ENCODE measurements at regions of chr18 and their contacts with region 1.

Region 1: DNA sequence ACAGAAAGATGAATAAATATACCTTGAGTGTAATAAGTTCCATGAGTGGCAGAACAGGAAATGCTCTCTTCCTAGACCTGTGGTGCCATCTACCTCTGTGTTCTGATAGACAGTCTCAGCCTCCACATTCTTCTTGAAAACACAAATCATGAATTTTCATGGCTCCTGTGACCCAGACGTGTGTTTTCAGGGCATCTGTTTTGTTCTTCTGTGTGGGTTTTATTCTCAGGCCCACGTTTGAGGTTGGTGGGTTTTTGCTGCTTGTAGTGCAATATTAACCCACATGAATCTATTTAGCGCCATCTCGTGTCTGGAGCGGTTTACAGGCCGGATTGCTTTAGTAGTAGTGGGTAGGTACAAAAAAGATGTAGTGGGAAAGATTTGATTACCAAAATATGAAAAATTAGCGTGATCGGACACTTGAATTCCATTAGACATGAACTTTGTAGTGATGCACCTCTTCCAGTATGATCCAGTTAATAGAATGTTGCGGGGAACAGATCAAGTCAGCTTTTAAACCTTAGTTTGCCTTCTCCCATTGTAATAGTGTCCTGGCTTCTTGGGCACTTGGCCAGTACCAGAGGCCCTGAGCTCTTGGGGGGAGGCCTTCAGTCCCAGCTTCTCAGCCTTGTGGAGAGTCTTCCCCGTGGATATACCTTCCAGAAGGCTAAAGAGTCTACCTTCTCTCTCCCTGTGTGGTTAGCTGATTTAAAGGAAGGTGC is 256.5 kb downstream of the TPGS2 start:
- DNase-seq: no peak
- H3K4me3 ChIP-seq: no peak overlapping the region
- H3K27ac ChIP-seq: no peak overlapping the region
- H3K4me1 ChIP-seq: peaks cover 0 to 4% (median 3%) of the 10 kb centered on the region in 4 experiments; a peak in 5 of 7 replicates
- H3K27me3 ChIP-seq: no peaks in the 10 kb centered on the region
- CTCF ChIP-seq: peak; percentile 6 to 63 (median 63)
- EP300 ChIP-seq: no peak
- POLR2A ChIP-seq: no peak
- RAD21 ChIP-seq: peak; percentile 67 to 75

Region 2: DNA sequence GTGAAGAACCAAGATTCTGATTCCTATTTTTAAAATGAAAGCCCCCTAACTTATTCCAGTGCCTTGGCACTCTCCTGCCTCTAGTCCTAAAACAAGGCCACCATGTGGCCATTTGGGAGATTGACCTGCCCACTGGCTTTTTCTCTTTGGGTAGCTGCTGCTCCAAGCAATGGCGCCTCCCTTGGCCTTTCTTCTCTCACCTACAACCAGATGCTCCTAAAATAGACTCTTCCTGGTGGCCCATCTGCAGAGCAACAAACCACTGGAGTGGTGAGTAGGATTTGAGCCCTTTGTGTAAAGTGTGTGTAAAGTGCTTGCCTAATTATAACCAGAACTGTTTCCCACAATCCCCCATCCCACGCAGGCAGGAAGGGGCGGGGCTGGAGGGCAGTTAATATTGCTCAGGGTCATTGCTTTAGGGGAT is 160.5 kb before region 1 on chr18:
- CTCF ChIA-PET with region 1: interaction called, 16 read pairs
- POLR2A ChIA-PET with region 1: no interaction called
- DNase-seq: peak in 1 of 2 experiments; percentile 70
- H3K4me3 ChIP-seq: no peak overlapping the region
- H3K27ac ChIP-seq: no peak overlapping the region
- H3K4me1 ChIP-seq: no peaks in the 10 kb centered on the region
- H3K27me3 ChIP-seq: no peaks in the 10 kb centered on the region
- CTCF ChIP-seq: peak; percentile 67 to 98 (median 77)
- EP300 ChIP-seq: no peak
- POLR2A ChIP-seq: no peak
- RAD21 ChIP-seq: peak; percentile 64 to 77

Region 3: DNA sequence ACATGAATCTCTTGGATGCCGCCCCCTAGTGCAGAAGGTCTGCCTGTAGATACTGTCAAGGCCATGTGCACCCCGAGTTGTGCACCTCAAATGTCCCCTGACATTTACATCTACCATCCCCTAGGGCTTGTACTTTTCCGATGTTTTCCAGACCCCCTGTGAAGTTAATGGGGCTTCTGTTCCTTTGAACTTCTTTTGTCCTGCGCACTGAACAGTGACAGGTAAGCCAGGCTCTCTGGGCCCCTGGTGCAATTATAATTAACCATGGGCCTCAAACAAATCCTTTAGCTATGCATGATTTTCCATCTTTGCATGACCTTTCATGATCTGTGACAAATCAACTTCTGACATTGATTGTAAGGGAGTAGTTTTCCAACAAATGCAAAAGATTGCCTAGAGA is 116.4 kb before region 1 on chr18:
- CTCF ChIA-PET with region 1: interaction called, 17 read pairs
- POLR2A ChIA-PET with region 1: no interaction called
- DNase-seq: no peak
- H3K4me3 ChIP-seq: no peak overlapping the region
- H3K27ac ChIP-seq: no peak overlapping the region
- H3K4me1 ChIP-seq: peaks cover 3 to 10% (median 6%) of the 10 kb centered on the region in 4 experiments
- H3K27me3 ChIP-seq: no peaks in the 10 kb centered on the region
- CTCF ChIP-seq: peak; percentile 4 to 44 (median 27); a peak in 3 of 4 replicates
- EP300 ChIP-seq: no peak
- POLR2A ChIP-seq: no peak
- RAD21 ChIP-seq: no peak

Region 4: GRCh38 chr18:36561046-36561445 is 11.2 kb before region 1 on chr18:
- CTCF ChIA-PET with region 1: interaction called, 21 read pairs
- POLR2A ChIA-PET with region 1: no interaction called
- DNase-seq: no peak
- H3K4me3 ChIP-seq: no peak overlapping the region
- H3K27ac ChIP-seq: no peak overlapping the region
- H3K4me1 ChIP-seq: peaks cover 0 to 15% (median 7%) of the 10 kb centered on the region in 4 experiments; a peak in 4 of 7 replicates
- H3K27me3 ChIP-seq: no peaks in the 10 kb centered on the region
- CTCF ChIP-seq: no peak
- EP300 ChIP-seq: no peak
- POLR2A ChIP-seq: no peak
- RAD21 ChIP-seq: no peak

Region 5: DNA sequence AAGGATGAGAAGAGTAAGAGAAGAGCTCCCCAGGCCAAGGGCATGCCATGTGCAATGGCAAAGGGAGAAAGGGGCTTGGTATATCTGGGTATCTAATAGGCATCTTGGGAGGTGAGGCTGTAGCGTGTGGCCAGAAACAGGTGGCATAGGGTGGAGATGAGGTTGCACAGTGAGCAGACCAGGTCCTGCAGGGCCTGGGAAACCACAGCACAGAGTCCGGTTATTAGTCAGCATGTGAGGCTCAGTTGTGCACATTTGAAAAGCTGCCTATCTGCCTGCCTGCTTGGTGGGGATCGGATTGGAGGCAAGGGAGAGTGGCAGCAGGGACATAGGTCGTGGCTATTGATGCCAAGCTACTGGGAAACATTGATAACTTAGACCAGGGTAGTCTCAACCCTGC is 65.9 kb after region 1 on chr18:
- CTCF ChIA-PET with region 1: no interaction called
- POLR2A ChIA-PET with region 1: no interaction called
- DNase-seq: no peak
- H3K4me3 ChIP-seq: no peak overlapping the region
- H3K27ac ChIP-seq: no peak overlapping the region
- H3K4me1 ChIP-seq: peaks cover 2 to 12% (median 9%) of the 10 kb centered on the region in 4 experiments; a peak in 6 of 7 replicates
- H3K27me3 ChIP-seq: no peaks in the 10 kb centered on the region
- CTCF ChIP-seq: no peak
- EP300 ChIP-seq: no peak
- POLR2A ChIP-seq: no peak
- RAD21 ChIP-seq: no peak